Endothelial cell of umbilical vein (primary cell): ENCODE measurements at regions of chr2 and their contacts with region 1.

Region 1: GRCh38 chr2:234203135-234203984 is 152.9 kb downstream of the SPP2 start:
- DNase-seq: peak; percentile 98
- H3K4me3 ChIP-seq: peak overlapping the region in 1 of 3 experiments; percentile 14
- H3K27ac ChIP-seq: peak overlapping the region; percentile 93
- H3K4me1 ChIP-seq: peaks cover 17% of the 10 kb centered on the region
- H3K27me3 ChIP-seq: no peaks in the 10 kb centered on the region
- CTCF ChIP-seq: no peak
- POLR2A ChIP-seq: no peak

Region 2: GRCh38 chr2:234146087-234146826 is 57.1 kb before region 1 on chr2:
- CTCF ChIA-PET with region 1: interaction called, 7 read pairs
- POLR2A ChIA-PET with region 1: no interaction called
- dilution Hi-C with region 1: no loop called
- intact Hi-C with region 1: loop called (anchors 2 kb)
- DNase-seq: peak; percentile 78
- H3K4me3 ChIP-seq: no peak overlapping the region
- H3K27ac ChIP-seq: peak overlapping the region; percentile 78
- H3K4me1 ChIP-seq: peaks cover 10% of the 10 kb centered on the region
- H3K27me3 ChIP-seq: no peaks in the 10 kb centered on the region
- CTCF ChIP-seq: no peak
- POLR2A ChIP-seq: no peak

Region 3: DNA sequence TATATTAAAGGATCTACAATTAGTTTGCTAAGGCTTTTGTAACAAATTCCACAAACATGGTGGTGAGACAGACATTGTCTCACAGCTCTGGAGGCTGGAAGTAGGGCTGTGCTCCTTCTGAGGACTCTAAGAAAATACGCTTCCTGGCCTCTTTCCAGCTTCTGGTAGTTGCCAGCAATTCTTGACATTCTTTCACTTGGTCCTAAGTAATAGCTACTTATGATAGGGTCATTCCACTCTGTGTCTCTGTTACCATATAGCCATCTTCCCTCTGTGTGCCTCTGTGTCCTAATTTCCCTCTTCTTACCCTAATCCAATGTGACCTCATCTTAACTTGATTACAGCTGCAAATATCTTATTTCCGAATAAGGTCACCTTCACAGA is 34.2 kb before region 1 on chr2:
- CTCF ChIA-PET with region 1: no interaction called
- POLR2A ChIA-PET with region 1: no interaction called
- dilution Hi-C with region 1: no loop called
- intact Hi-C with region 1: loop called (anchors 2 kb)
- DNase-seq: peak; percentile 80
- H3K4me3 ChIP-seq: no peak overlapping the region
- H3K27ac ChIP-seq: no peak overlapping the region
- H3K4me1 ChIP-seq: peaks cover 2% of the 10 kb centered on the region
- H3K27me3 ChIP-seq: no peaks in the 10 kb centered on the region
- CTCF ChIP-seq: no peak
- POLR2A ChIP-seq: no peak